Calu3 (cell line): ENCODE measurements at regions of chr12 and their contacts with region 1.

Region 1: GRCh38 chr12:42756841-42757661 is 167.5 kb upstream of the PRICKLE1 start:
- DNase-seq: peak; percentile 77
- H3K4me3 Mint-ChIP-seq: no peak overlapping the region
- H3K27ac Mint-ChIP-seq: peak overlapping the region; percentile 77
- H3K4me1 Mint-ChIP-seq: peaks cover 39% of the 10 kb centered on the region
- H3K27me3 Mint-ChIP-seq: no peaks in the 10 kb centered on the region
- CTCF ChIP-seq: no peak

Region 2: DNA sequence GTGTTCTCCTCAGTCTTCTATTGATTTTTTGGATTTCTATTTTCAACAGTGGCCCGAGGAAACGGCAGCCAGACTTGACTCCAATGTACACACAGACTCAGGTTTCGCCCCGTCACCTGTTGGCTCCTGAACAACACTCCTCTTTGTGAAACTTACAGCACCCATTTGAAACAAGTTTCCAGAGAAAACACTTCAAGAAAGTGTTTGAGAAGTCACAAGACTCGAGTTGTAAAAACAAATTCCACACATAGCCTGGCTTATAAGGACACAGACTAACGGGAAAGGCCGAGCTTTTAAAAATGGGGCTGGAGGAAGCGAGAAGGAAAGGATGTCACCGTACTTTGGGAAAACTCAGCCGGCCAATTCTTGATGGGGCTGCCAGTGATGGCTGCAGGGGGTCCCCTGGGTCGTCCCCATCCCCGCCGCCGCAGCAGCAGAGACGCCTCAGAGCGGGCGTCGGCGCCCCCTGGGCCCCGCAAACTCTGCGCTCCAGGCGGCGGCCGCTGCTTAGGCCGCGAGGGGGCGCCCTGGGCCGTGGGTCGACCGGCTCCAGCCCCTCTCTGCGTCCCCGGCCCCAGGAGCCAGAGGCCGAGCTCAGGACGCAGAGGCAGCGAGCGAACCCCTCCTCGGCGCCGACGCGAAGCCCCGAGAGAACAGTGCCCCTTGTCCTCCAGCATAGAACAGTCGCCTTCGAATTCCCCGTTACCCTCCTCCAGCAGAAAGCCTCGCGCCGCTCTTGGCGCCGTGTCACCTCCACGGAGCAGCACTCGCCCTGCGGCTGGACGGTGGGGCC is 274.4 kb before region 1 on chr12:
- CTCF ChIA-PET with region 1: no interaction called
- intact Hi-C with region 1: loop called (anchors 5 kb)
- DNase-seq: peak; percentile 86
- H3K4me3 Mint-ChIP-seq: peak overlapping the region; percentile 96
- H3K27ac Mint-ChIP-seq: peak overlapping the region; percentile 66
- H3K4me1 Mint-ChIP-seq: peaks cover 9% of the 10 kb centered on the region
- H3K27me3 Mint-ChIP-seq: no peaks in the 10 kb centered on the region
- CTCF ChIP-seq: peak; percentile 59

Region 3: DNA sequence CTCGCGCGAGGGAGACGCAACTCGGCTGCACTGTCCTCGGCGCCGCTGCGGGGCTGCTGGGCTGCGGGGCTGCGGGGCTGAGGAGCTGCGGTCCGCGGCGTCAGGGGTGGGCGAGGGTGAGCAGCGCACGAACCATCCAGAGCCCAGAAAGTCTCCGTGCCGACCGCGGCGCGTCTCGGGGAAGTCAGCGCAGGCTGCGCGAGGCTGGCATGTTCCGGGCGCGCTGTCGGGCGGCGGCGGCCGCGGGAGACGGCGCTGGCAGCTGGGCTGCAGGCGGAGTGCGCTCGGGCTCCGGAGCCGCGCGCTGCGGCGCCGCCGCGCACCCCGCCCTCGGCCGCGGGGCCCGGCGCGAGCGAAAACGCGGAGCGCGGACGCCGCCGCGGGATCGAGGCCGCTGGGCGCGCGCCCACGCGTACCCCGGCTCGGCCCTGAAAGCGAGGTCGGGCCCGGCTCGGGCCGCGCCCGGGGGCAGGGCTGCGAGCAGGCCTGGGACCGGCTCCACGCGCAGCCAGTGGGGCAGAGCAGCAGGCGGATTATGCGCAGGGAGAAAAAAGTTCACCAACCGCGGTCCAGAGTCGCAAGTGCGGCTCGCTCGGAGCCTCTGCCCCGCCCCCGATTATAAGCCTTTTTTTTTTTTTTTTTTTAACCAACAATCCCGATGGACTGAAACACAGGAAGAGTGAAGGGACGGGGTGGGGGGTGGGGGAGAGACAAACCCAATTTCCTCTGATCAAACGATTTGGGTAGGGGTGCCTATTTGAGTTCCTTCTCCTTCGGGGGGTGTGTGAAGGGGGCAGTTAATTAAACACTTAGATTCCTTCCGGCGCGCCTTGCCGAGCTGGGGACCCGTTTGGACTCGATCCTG is 167.4 kb before region 1 on chr12 and contains the start of gene PRICKLE1:
- CTCF ChIA-PET with region 1: no interaction called
- intact Hi-C with region 1: loop called (anchors 10 kb)
- DNase-seq: peak; percentile 48
- H3K4me3 Mint-ChIP-seq: peak within 1 kb of the TSS; percentile 81
- H3K27ac Mint-ChIP-seq: peak within 1 kb of the TSS; percentile 36
- H3K4me1 Mint-ChIP-seq: peaks cover 15% of the 10 kb centered on the region
- H3K27me3 Mint-ChIP-seq: no peaks in the 10 kb centered on the region
- CTCF ChIP-seq: no peak
- total RNA-seq, gene PRICKLE1: 7.0 and 12.7 TPM in 2 replicates

Region 4: GRCh38 chr12:42790761-42791151 is 33.7 kb after region 1 on chr12:
- CTCF ChIA-PET with region 1: interaction called, 3 read pairs
- intact Hi-C with region 1: loop called (anchors 5 kb)
- DNase-seq: peak; percentile 56
- H3K4me3 Mint-ChIP-seq: no peak overlapping the region
- H3K27ac Mint-ChIP-seq: peak overlapping the region; percentile 63
- H3K4me1 Mint-ChIP-seq: peaks cover 29% of the 10 kb centered on the region
- H3K27me3 Mint-ChIP-seq: no peaks in the 10 kb centered on the region
- CTCF ChIP-seq: no peak

Region 5: DNA sequence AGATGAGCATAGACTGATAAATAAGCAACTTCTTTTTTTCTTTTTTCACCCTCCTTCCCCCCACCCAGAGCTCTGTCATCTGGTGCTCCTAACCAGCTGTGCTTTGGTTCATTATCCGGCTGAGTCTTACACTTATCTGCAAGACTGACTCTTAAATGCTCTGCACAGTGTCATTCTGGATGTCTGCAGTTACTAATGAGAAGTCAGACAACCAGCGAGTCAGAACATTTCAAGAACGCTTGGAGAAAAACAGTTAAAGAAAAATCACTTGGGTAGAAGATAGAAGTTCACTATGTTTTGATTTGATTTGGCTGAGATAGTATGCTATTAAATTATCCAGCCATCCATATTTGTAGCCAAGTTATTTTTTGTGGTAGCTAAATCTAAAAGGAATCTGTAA is 161.4 kb after region 1 on chr12:
- CTCF ChIA-PET with region 1: no interaction called
- intact Hi-C with region 1: loop called (anchors 5 kb)
- DNase-seq: no peak
- H3K4me3 Mint-ChIP-seq: no peak overlapping the region
- H3K27ac Mint-ChIP-seq: no peak overlapping the region
- H3K4me1 Mint-ChIP-seq: peaks cover 46% of the 10 kb centered on the region
- H3K27me3 Mint-ChIP-seq: no peaks in the 10 kb centered on the region
- CTCF ChIP-seq: no peak

Region 6: GRCh38 chr12:42961395-42961794 is 204.3 kb after region 1 on chr12:
- CTCF ChIA-PET with region 1: no interaction called
- intact Hi-C with region 1: loop called (anchors 1 kb)
- DNase-seq: peak; percentile 66
- H3K4me3 Mint-ChIP-seq: no peak overlapping the region
- H3K27ac Mint-ChIP-seq: peak overlapping the region; percentile 67
- H3K4me1 Mint-ChIP-seq: peaks cover 49% of the 10 kb centered on the region
- H3K27me3 Mint-ChIP-seq: no peaks in the 10 kb centered on the region
- CTCF ChIP-seq: no peak

Region 7: GRCh38 chr12:43282106-43282505 is 525.1 kb after region 1 on chr12:
- CTCF ChIA-PET with region 1: interaction called, 3 read pairs
- intact Hi-C with region 1: loop called (anchors 5 kb)
- DNase-seq: no peak
- H3K4me3 Mint-ChIP-seq: no peak overlapping the region
- H3K27ac Mint-ChIP-seq: no peak overlapping the region
- H3K4me1 Mint-ChIP-seq: peaks cover 23% of the 10 kb centered on the region
- H3K27me3 Mint-ChIP-seq: no peaks in the 10 kb centered on the region
- CTCF ChIP-seq: no peak